ENCODE measurements at regions of chr17 and their contacts with region 1.

Region 1: DNA sequence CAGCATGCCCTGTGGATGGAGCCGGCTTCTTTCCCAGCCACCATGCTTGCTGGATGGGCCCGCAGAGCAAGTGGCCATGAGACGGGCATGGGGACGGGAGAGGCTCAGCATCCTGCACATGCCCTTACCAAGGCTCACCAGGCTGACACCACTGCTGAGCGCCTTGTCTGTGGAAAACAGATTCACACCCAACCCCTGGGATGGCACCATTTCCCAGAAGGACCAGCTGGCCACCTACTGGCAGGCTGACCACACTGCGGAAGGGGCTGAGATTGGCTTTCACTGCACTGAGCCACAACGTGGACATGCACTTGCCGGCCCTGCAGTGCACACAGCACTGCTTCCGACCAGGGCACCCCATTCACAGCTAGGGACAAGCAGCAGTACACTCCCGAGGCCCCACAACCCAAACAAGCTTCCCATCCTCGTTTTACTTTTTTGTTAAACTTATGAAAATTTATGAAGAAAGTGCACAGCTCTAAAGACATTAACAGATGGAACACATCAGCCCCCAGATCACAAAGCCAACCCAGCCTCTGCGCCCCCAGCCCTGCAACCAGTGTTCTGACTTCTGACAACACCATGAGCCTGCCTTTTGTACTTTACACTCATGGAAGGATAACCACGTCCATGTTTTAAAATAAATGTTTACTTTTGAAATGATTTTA is 13.9 kb upstream of the KRTAP17-1 start:
- DNase-seq: no peak
- H3K4me3 ChIP-seq: no peak overlapping the region
- CTCF ChIP-seq: peak; percentile 95

Region 2: DNA sequence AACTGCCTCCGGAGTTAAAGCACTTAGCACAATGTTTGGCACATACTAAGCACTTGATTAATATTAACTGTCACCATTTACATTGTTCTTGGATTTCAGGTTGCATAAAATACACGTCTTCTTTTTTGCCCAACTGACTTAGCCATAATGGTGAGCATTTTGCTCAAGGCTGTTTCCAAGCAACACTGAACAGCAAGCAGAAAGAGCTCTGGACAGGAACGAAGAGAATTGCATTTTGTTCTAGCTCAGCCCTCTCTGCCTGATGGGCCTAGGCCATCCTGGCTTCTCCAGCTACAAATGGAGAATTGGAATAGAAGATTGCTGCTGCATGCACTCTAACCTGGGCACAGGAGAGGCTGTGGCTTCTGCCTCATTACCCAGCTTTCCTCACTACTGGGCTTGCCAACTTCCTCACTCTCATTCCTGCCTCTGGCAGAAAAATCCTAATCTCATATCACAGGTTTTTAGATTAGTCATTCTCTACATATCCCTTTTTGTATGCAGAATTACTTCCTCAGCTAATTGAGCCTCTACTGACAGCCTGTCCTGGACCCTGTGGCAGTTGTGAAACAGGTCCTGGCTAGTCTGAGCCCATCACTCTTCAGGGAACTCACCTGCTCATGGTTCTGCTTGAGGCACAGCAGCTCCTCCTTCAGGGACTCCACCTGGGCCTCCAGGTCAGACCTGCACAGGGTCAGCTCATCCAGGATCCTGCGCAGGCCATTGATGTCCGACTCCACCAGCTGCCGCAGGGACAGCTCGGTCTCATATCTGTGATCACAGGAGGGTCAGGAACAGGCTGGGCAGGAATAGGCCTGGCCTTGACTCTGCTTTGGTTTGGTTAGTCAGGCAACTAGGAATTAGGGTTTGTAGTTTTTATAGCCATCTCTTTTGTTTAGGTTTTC is 18.7 kb after region 1 on chr17:
- CTCF ChIA-PET with region 1: interaction called, 22 read pairs
- POLR2A ChIA-PET with region 1: no interaction called
- DNase-seq: no peak
- H3K4me3 ChIP-seq: no peak overlapping the region
- CTCF ChIP-seq: no peak

Region 3: GRCh38 chr17:41367426-41368075 is 38.1 kb after region 1 on chr17:
- CTCF ChIA-PET with region 1: interaction called, 10 read pairs
- POLR2A ChIA-PET with region 1: no interaction called
- DNase-seq: no peak
- H3K4me3 ChIP-seq: no peak overlapping the region
- CTCF ChIP-seq: no peak

Measured in AG04449 (cell line).